Breast epithelium (tissue), 4 donors: ENCODE measurements at regions of chr10 and their contacts with region 1.

Region 1: DNA sequence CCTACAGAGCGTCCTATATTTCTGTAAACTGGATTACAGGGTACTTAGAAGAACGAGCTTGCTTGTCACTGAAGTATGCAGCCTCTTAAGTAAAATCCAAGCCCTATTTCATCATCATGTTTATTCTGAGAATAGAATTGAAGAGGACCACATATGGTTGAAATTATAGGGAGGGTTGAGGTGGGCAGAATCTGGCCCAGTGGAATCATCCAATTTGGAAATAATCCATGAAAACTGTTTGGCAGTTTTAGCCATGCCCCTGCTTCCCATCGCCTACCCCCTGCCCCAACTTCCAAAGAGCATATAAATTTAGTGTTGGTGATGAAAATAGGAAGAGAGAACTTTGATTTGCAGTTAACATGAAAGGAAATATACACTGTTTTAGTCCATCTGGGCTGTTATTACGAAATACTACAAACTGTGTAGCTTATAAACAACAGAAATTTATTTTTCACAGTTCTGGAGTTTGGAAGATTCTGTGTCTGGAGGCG is 150.4 kb downstream of the PRKG1 start:
- DNase-seq: no peak
- H3K4me3 ChIP-seq: peak overlapping the region in 1 of 3 donors; percentile 30
- H3K27ac ChIP-seq: peak overlapping the region in 1 of 2 donors; percentile 45
- H3K4me1 ChIP-seq: no peaks in the 10 kb centered on the region
- H3K27me3 ChIP-seq: no peaks in the 10 kb centered on the region
- CTCF ChIP-seq: no peak
- POLR2A ChIP-seq: no peak

Region 2: GRCh38 chr10:50325449-50326171 is 899.1 kb before region 1 on chr10:
- intact Hi-C with region 1: loop called (anchors 10 kb)
- DNase-seq: peak in 1 of 2 donors; percentile 68
- H3K4me3 ChIP-seq: no peak overlapping the region
- H3K27ac ChIP-seq: peak overlapping the region; percentile 16 to 50
- H3K4me1 ChIP-seq: no peaks in the 10 kb centered on the region
- H3K27me3 ChIP-seq: no peaks in the 10 kb centered on the region
- CTCF ChIP-seq: no peak
- POLR2A ChIP-seq: no peak

Region 3: DNA sequence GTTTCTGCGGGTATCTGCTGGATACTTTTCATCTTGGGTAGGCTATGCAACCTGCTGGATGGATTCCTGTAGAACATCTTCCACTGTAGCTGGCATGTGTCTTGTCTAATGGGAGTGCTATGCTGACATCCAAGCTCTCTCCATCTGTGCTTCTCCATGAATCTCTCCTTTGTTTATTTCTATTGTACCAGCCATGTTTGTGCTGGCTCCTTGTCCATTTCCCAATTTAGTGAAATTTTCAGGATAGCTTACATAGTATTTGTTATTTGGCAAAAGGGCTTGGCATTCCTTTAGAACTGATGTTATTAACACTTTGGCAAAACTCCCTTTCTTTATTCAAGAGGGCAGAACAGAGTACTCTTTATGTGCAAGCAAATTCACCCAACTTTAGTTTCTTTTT is 276.7 kb after region 1 on chr10:
- intact Hi-C with region 1: loop called (anchors 10 kb)
- DNase-seq: peak in 1 of 2 donors; percentile 29
- H3K4me3 ChIP-seq: no peak overlapping the region
- H3K27ac ChIP-seq: peak overlapping the region in 1 of 2 donors; percentile 33
- H3K4me1 ChIP-seq: no peaks in the 10 kb centered on the region
- H3K27me3 ChIP-seq: no peaks in the 10 kb centered on the region
- CTCF ChIP-seq: no peak
- POLR2A ChIP-seq: no peak

Region 4: GRCh38 chr10:51667678-51668335 is 443.1 kb after region 1 on chr10:
- intact Hi-C with region 1: loop called (anchors 5 kb)
- DNase-seq: no peak
- H3K4me3 ChIP-seq: no peak overlapping the region
- H3K27ac ChIP-seq: no peak overlapping the region
- H3K4me1 ChIP-seq: no peaks in the 10 kb centered on the region
- H3K27me3 ChIP-seq: no peaks in the 10 kb centered on the region
- CTCF ChIP-seq: no peak
- POLR2A ChIP-seq: no peak